Esophagus muscularis mucosa (tissue), 4 donors: ENCODE measurements at regions of chr13 and their contacts with region 1.

Region 1: DNA sequence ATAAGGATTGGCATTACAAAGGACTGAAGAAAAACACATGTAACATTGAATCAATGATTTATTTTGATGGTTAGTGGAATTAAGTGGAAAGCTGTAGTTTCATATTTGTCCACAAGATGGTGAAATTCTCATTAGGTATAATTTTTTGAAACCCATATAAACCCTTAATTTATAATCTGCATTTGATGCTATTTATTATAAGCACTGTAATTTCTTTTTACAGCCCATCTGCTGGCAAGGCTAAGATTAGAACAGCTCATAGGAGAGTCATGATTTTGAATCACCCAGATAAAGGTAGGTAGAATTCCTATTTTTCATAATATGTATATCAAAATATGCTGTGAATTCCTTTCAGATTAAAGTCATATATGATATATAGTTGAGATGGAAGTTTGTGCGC is 62.2 kb downstream of the DNAJC15 start:
- DNase-seq: no peak
- H3K4me3 ChIP-seq: no peak overlapping the region
- H3K27ac ChIP-seq: no peak overlapping the region
- H3K4me1 ChIP-seq: peaks cover 0 to 11% (median 1%) of the 10 kb centered on the region in 4 donors
- H3K27me3 ChIP-seq: no peaks in the 10 kb centered on the region
- CTCF ChIP-seq: peak; percentile 60 to 84 (median 75)
- EP300 ChIP-seq: no peak
- POLR2A ChIP-seq: no peak

Region 2: DNA sequence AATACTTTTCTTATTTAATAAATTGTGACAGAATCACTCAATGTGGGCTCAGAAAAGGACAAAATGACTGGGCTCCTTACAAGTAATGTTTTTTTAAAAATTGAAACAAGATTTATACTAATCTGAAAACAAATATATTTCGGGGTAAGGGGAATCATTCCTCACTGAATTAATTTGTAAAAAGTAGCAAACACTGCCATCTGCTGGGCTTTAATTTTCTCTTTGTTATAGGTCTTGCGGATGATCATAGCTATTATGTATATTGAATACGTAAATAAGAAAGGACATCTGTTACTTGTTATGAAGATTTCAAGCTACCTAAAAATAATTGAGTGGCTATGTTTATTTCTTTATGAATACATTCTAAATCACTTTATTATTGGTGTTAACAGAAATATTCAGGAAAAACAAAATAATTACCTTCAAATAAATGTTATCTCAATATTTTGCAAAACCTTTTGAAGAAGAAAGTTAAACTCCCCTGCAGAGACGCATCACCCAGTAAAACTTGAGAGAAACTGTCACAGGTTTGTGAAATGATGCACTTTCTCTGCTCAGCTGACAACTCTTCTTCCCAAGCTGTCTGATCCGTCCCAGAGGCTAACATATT is 719.0 kb after region 1 on chr13:
- intact Hi-C with region 1: loop called (anchors 2 kb)
- DNase-seq: no peak
- H3K4me3 ChIP-seq: peak overlapping the region in 2 of 4 donors; percentile 10 to 21
- H3K27ac ChIP-seq: peak overlapping the region; percentile 34 to 71 (median 38)
- H3K4me1 ChIP-seq: peaks cover 0 to 11% (median 8%) of the 10 kb centered on the region in 4 donors
- H3K27me3 ChIP-seq: no peaks in the 10 kb centered on the region
- CTCF ChIP-seq: peak; percentile 61 to 72 (median 63)
- EP300 ChIP-seq: no peak
- POLR2A ChIP-seq: no peak